Ascending aorta (tissue), 2 donors: ENCODE measurements at regions of chr5 and their contacts with region 1.

Region 1: GRCh38 chr5:123371575-123372179 is 51.5 kb downstream of the CEP120 start:
- DNase-seq: peak in 1 of 2 donors; percentile 74
- H3K4me3 ChIP-seq: no peak overlapping the region
- H3K27ac ChIP-seq: no peak overlapping the region
- H3K4me1 ChIP-seq: peaks cover 0 to 8% of the 10 kb centered on the region in 2 donors
- H3K27me3 ChIP-seq: no peaks in the 10 kb centered on the region
- CTCF ChIP-seq: peak in 2 of 3 experiments; percentile 44 to 50

Region 2: DNA sequence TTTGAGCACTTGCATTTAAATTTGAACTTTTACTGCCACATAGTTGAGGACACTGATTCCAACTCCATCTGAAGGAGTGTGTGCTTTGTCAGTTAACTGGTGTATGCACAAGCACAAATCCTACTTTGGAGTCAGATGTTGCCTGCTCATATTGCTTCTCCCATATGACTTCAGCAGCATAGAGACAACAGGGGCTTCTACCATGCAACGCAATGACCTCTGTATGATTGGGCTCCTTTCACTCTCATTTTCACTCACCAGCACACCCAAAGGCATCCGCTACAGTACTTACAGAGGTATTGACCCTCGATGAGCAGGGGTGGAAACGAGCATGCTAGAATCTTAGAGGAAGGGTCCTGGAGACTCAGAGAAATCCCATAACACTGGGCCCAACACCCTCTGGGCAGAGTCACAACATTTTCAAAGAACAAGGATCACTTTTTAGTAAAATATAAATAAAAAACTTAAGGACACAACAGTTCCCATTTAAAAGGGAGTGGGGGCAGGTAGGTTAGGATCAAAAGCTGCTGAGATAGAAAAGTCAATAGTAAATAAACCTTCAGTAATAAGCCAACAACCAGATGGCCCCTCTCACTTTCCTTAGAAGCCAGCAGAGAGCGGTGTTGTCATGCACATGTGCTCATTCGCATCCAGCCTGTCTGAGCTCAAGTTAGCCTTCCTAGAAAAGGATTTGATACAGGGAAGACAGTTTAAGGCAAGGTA is 855.8 kb before region 1 on chr5:
- intact Hi-C with region 1: loop called (anchors 5 kb)
- DNase-seq: peak in 1 of 2 donors; percentile 69
- H3K4me3 ChIP-seq: no peak overlapping the region
- H3K27ac ChIP-seq: no peak overlapping the region
- H3K4me1 ChIP-seq: no peaks in the 10 kb centered on the region
- H3K27me3 ChIP-seq: no peaks in the 10 kb centered on the region
- CTCF ChIP-seq: peak; percentile 15 to 72 (median 52)

Region 3: GRCh38 chr5:122704243-122705036 is 667.2 kb before region 1 on chr5:
- intact Hi-C with region 1: loop called (anchors 10 kb)
- DNase-seq: no peak
- H3K4me3 ChIP-seq: no peak overlapping the region
- H3K27ac ChIP-seq: no peak overlapping the region
- H3K4me1 ChIP-seq: no peaks in the 10 kb centered on the region
- H3K27me3 ChIP-seq: no peaks in the 10 kb centered on the region
- CTCF ChIP-seq: peak; percentile 32 to 58 (median 54)

Region 4: DNA sequence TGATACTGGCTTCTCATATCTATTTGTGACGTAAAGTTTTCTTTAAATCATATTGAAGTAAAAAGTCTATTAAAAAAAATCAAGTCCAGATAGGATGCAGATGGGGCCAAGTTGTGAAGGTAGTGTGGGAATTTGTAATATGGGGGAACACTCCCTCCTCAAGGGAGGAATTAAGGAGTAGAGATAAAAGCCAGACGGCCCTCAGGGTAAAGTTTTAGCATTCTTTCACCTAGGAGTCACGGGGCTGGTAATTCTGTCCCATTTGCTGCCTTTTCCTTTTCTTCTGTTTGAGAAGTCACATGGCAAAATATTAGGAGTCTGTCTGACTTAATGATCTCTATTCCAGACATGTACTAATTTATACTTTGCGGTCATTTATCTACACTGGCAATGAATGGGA is 464.4 kb before region 1 on chr5:
- intact Hi-C with region 1: loop called (anchors 5 kb)
- DNase-seq: no peak
- H3K4me3 ChIP-seq: peak overlapping the region in 1 of 2 donors; percentile 24
- H3K27ac ChIP-seq: peak overlapping the region; percentile 41 to 68
- H3K4me1 ChIP-seq: peaks cover 0 to 16% of the 10 kb centered on the region in 2 donors
- H3K27me3 ChIP-seq: no peaks in the 10 kb centered on the region
- CTCF ChIP-seq: no peak